Heart right ventricle (tissue), 16 donors: ENCODE measurements at regions of chr2 and their contacts with region 1.

Region 1: DNA sequence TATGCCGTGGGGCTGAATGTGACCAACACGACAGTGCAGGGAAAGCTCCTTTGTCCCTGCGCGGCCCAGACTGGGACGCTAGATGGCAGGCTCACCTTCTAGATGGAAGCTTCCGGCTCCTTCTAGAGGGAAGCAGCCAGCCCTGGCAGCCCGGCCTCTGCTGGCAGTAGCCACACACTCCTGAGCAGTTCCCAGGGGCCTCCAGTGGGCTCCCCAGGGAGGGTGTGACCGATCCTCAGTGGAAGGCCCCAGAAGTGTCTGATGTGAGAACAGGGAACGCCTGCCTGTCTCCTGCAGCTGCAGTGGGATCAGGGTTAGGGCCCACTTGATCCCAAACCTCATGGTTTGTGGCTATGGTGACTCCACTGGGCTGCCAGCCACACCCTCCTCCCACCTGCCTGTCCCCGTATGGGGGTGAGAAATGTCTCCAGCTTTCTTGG is 48.5 kb upstream of the LRPPRC start:
- DNase-seq: peak; percentile 78 to 81
- ATAC-seq: peak; percentile 79 to 98 (median 96)
- H3K4me3 ChIP-seq: no peak overlapping the region
- H3K27ac ChIP-seq: no peak overlapping the region
- H3K4me1 ChIP-seq: peaks cover 0 to 7% (median 3%) of the 10 kb centered on the region in 9 donors
- H3K27me3 ChIP-seq: peaks cover 0 to 4% (median 0%) of the 10 kb centered on the region in 7 donors
- CTCF ChIP-seq: peak; percentile 46 to 94 (median 88)

Region 2: DNA sequence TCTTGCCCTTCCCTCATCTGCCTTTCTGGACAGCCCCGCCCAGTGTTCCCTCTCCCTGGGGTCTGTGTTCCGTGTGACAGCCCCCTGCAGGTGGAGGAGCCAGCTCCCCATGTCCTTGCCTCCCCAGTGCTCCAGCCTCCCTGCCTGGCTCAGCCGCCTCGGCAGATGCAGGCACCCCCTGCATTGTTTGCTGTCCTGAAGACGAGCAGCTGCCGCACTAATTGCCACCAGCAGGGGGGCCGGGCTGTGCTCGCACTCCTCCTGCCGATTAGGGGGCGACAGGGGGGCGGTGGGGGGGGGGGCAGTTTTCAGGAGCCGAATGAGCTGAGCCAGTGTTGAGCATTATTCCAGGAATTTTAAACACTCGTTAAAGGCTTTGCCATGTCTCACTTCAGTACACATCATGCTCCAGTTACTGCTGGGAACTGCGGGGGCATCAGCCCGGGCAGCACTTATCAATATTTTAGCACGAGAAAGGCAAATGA is 920.5 kb after region 1 on chr2:
- intact Hi-C with region 1: loop called in 8 of 10 experiments (anchors 5 to 10 kb)
- DNase-seq: no peak
- ATAC-seq: no peak
- H3K4me3 ChIP-seq: no peak overlapping the region
- H3K27ac ChIP-seq: no peak overlapping the region
- H3K4me1 ChIP-seq: peaks cover 0 to 11% (median 0%) of the 10 kb centered on the region in 9 donors
- H3K27me3 ChIP-seq: peaks cover 0 to 67% (median 46%) of the 10 kb centered on the region in 7 donors
- CTCF ChIP-seq: peak in 2 of 9 donors; percentile 6 to 21